B cell (primary cell): ENCODE measurements at regions of chr22 and their contacts with region 1.

Region 1: DNA sequence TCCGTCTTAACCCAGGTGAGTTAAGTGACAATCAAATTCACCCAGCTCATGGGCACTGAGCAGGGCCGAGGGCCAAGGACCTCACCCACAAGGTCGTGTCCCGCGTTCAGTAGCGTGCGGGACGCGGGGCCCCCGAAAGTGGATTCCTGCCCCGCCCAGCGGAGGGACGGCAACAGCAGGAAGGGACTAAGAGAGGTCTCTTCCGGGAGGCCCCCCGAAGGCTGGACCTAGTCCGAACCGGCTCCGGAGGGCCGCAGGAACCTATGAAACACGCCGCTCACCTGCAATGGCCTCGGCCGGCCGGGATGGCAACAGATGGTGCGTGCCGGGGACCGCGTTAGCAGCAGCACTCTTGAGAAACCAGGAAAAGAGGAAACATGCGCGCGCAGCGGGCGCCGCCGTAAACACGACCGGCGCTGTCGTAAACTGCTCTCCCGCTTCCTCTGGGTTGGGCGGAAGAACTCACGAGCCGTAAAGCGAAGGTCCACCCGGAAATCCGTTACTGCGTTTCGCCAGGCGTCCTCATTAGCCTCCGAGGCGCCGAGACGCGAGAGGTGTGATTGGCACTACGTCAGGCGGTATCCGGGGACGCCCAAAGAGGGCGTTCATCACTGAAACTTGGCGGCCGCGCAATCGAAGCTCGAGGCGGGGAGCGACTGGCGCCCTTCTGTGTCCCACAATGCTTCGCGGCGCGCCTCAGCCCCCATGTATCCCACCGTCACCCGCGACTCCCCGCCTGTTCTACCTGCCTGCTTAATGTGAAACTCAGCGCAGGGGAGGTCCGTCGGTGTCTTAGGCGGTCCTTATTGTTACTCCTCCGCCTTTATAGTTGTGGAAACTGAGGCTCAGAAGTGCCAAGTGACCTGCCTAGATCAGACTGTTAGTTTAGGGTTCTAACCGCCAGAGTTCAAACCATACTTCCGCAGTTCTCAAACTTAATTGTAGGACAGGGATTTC is at the start of gene EIF3D:
- DNase-seq: peak; percentile 100
- ATAC-seq: peak; percentile 92
- H3K4me3 ChIP-seq: peak within 1 kb of the TSS; percentile 80 to 97 (median 88)
- H3K4me3 Mint-ChIP-seq: peak within 1 kb of the TSS; percentile 98
- H3K27ac ChIP-seq: peak within 1 kb of the TSS; percentile 88 to 93
- H3K27ac Mint-ChIP-seq: peak within 1 kb of the TSS; percentile 98
- H3K4me1 ChIP-seq: peaks cover 13 to 24% of the 10 kb centered on the region in 2 donors
- H3K4me1 Mint-ChIP-seq: peaks cover 28% of the 10 kb centered on the region
- H3K27me3 ChIP-seq: no peaks in the 10 kb centered on the region
- H3K27me3 Mint-ChIP-seq: no peaks in the 10 kb centered on the region
- CTCF ChIP-seq: no peak
- total RNA-seq, gene EIF3D: 257 and 274 TPM in 2 replicates

Region 2: GRCh38 chr22:35257321-35258190 is 1271.5 kb before region 1 on chr22 and contains the start of gene HMGXB4:
- CTCF ChIA-PET with region 1: no interaction called
- POLR2A ChIA-PET with region 1: no interaction called
- intact Hi-C with region 1: loop called (anchors 5 kb)
- DNase-seq: peak; percentile 93
- ATAC-seq: peak; percentile 88
- H3K4me3 ChIP-seq: peak within 1 kb of the TSS; percentile 64 to 79 (median 71)
- H3K4me3 Mint-ChIP-seq: peak within 1 kb of the TSS; percentile 92
- H3K27ac ChIP-seq: peak within 1 kb of the TSS; percentile 71 to 91
- H3K27ac Mint-ChIP-seq: peak within 1 kb of the TSS; percentile 94
- H3K4me1 ChIP-seq: peaks cover 12 to 15% of the 10 kb centered on the region in 2 donors
- H3K4me1 Mint-ChIP-seq: peaks cover 21% of the 10 kb centered on the region
- H3K27me3 ChIP-seq: no peaks in the 10 kb centered on the region
- H3K27me3 Mint-ChIP-seq: no peaks in the 10 kb centered on the region
- CTCF ChIP-seq: peak; percentile 38
- total RNA-seq, gene HMGXB4: 25.2 and 28.7 TPM in 2 replicates

Region 3: GRCh38 chr22:36365020-36365411 is 164.1 kb before region 1 on chr22:
- CTCF ChIA-PET with region 1: no interaction called
- POLR2A ChIA-PET with region 1: no interaction called
- intact Hi-C with region 1: no loop called
- DNase-seq: peak; percentile 77
- ATAC-seq: peak; percentile 88
- H3K4me3 ChIP-seq: no peak overlapping the region
- H3K4me3 Mint-ChIP-seq: peak overlapping the region; percentile 83
- H3K27ac ChIP-seq: peak overlapping the region; percentile 43 to 92
- H3K27ac Mint-ChIP-seq: peak overlapping the region; percentile 97
- H3K4me1 ChIP-seq: peaks cover 92 to 99% of the 10 kb centered on the region in 2 donors
- H3K4me1 Mint-ChIP-seq: peaks cover 91% of the 10 kb centered on the region
- H3K27me3 ChIP-seq: no peaks in the 10 kb centered on the region
- H3K27me3 Mint-ChIP-seq: no peaks in the 10 kb centered on the region
- CTCF ChIP-seq: no peak

Region 4: GRCh38 chr22:36481393-36482168 is 47.5 kb before region 1 on chr22 and contains the start of gene TXN2:
- CTCF ChIA-PET with region 1: interaction called, 3 read pairs
- POLR2A ChIA-PET with region 1: no interaction called
- intact Hi-C with region 1: loop called (anchors 1 kb)
- DNase-seq: peak; percentile 98
- ATAC-seq: peak; percentile 87
- H3K4me3 ChIP-seq: peak within 1 kb of the TSS; percentile 82 to 90 (median 86)
- H3K4me3 Mint-ChIP-seq: peak within 1 kb of the TSS; percentile 95
- H3K27ac ChIP-seq: peak within 1 kb of the TSS; percentile 95 to 98
- H3K27ac Mint-ChIP-seq: peak within 1 kb of the TSS; percentile 93
- H3K4me1 ChIP-seq: peaks cover 11 to 18% of the 10 kb centered on the region in 2 donors
- H3K4me1 Mint-ChIP-seq: peaks cover 17% of the 10 kb centered on the region
- H3K27me3 ChIP-seq: no peaks in the 10 kb centered on the region
- H3K27me3 Mint-ChIP-seq: no peaks in the 10 kb centered on the region
- CTCF ChIP-seq: no peak
- total RNA-seq, gene TXN2: 37.4 and 39.6 TPM in 2 replicates

Region 5: GRCh38 chr22:36506637-36507517 is 22.2 kb before region 1 on chr22 and contains the start of gene FOXRED2:
- CTCF ChIA-PET with region 1: interaction called, 11 read pairs
- POLR2A ChIA-PET with region 1: interaction called, 8 read pairs
- intact Hi-C with region 1: loop called (anchors 2 kb)
- DNase-seq: peak; percentile 92
- ATAC-seq: peak; percentile 98
- H3K4me3 ChIP-seq: peak within 1 kb of the TSS; percentile 26 to 80 (median 59)
- H3K4me3 Mint-ChIP-seq: peak within 1 kb of the TSS; percentile 77
- H3K27ac ChIP-seq: peak within 1 kb of the TSS; percentile 43 to 68
- H3K27ac Mint-ChIP-seq: peak within 1 kb of the TSS; percentile 56
- H3K4me1 ChIP-seq: peaks cover 10 to 13% of the 10 kb centered on the region in 2 donors
- H3K4me1 Mint-ChIP-seq: peaks cover 11% of the 10 kb centered on the region
- H3K27me3 ChIP-seq: no peaks in the 10 kb centered on the region
- H3K27me3 Mint-ChIP-seq: no peaks in the 10 kb centered on the region
- CTCF ChIP-seq: no peak
- total RNA-seq, gene FOXRED2: 7.1 and 7.4 TPM in 2 replicates

Region 6: GRCh38 chr22:36541831-36542411 is 12.8 kb after region 1 on chr22:
- CTCF ChIA-PET with region 1: no interaction called
- POLR2A ChIA-PET with region 1: no interaction called
- intact Hi-C with region 1: no loop called
- DNase-seq: no peak
- ATAC-seq: no peak
- H3K4me3 ChIP-seq: no peak overlapping the region
- H3K4me3 Mint-ChIP-seq: no peak overlapping the region
- H3K27ac ChIP-seq: no peak overlapping the region
- H3K27ac Mint-ChIP-seq: no peak overlapping the region
- H3K4me1 ChIP-seq: peaks cover 0 to 8% of the 10 kb centered on the region in 2 donors
- H3K4me1 Mint-ChIP-seq: peaks cover 2% of the 10 kb centered on the region
- H3K27me3 ChIP-seq: no peaks in the 10 kb centered on the region
- H3K27me3 Mint-ChIP-seq: peaks cover 9% of the 10 kb centered on the region
- CTCF ChIP-seq: no peak

Region 7: DNA sequence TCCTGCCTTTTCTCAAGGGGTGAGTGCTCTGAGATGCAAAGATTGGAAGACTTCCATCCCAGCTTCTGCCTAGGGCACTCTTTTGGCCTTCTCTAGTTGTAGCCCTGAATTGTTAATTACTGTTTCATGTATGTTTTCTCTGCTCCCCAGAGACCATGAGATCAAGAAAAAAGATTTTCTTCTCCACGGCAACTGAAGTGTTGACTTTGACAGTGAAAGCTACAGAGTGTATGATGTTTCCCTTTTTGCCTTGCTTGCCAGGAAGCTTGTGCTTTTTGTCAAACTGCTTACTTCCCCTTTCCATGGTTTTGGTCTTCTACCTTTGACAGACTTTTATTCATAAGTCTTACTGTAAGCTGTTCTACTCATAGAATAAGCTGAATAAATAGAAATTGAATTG is 23.2 kb after region 1 on chr22:
- CTCF ChIA-PET with region 1: interaction called, 3 read pairs
- POLR2A ChIA-PET with region 1: interaction called, 7 read pairs
- intact Hi-C with region 1: loop called (anchors 1 kb)
- DNase-seq: peak; percentile 85
- ATAC-seq: peak; percentile 90
- H3K4me3 ChIP-seq: peak overlapping the region in 2 of 5 experiments; percentile 20 to 23
- H3K4me3 Mint-ChIP-seq: peak overlapping the region; percentile 78
- H3K27ac ChIP-seq: peak overlapping the region; percentile 88 to 89
- H3K27ac Mint-ChIP-seq: peak overlapping the region; percentile 98
- H3K4me1 ChIP-seq: peaks cover 33 to 55% of the 10 kb centered on the region in 2 donors
- H3K4me1 Mint-ChIP-seq: peaks cover 48% of the 10 kb centered on the region
- H3K27me3 ChIP-seq: no peaks in the 10 kb centered on the region
- H3K27me3 Mint-ChIP-seq: no peaks in the 10 kb centered on the region
- CTCF ChIP-seq: no peak

Region 8: DNA sequence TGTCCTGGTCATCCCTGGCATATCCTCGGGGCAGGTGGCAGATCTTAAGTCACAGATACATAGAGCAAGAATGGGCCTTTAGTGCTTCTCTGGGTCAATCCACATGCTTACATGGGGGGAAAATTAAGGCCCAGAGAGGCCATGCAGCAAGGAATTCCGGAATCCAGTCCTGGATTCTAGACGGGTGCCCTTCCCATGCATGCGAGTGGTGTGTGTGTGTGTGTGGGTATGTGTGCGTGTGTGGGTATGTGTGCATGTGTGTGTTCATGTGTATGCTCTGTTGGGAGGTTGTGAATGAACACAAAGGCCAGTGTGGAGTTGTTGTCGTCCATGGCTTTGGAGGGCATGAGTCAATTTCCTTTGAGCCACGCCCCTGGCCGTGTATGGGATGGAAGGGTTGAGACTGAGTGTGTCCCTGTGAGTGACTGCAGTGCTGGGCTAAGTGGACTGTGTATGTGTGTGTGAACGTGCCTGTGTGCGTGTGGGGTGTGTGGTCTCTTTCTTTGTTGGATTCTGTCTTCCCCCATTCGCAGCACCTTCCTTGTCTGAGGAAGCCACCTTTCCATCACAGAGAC is 33.3 kb after region 1 on chr22:
- CTCF ChIA-PET with region 1: no interaction called
- POLR2A ChIA-PET with region 1: no interaction called
- intact Hi-C with region 1: no loop called
- DNase-seq: no peak
- ATAC-seq: no peak
- H3K4me3 ChIP-seq: no peak overlapping the region
- H3K4me3 Mint-ChIP-seq: no peak overlapping the region
- H3K27ac ChIP-seq: no peak overlapping the region
- H3K27ac Mint-ChIP-seq: no peak overlapping the region
- H3K4me1 ChIP-seq: peaks cover 6 to 11% of the 10 kb centered on the region in 2 donors
- H3K4me1 Mint-ChIP-seq: peaks cover 17% of the 10 kb centered on the region
- H3K27me3 ChIP-seq: peaks cover 0 to 14% (median 0%) of the 10 kb centered on the region in 4 experiments
- H3K27me3 Mint-ChIP-seq: peaks cover 32% of the 10 kb centered on the region
- CTCF ChIP-seq: no peak